MCF 10A (cell line): ENCODE measurements at regions of chr1 and their contacts with region 1.

Region 1: GRCh38 chr1:231550448-231550781 is 21.9 kb downstream of the TSNAX start:
- DNase-seq: peak; percentile 60
- H3K4me3 Mint-ChIP-seq: no peak overlapping the region
- H3K27ac Mint-ChIP-seq: no peak overlapping the region
- H3K4me1 Mint-ChIP-seq: peaks cover 16% of the 10 kb centered on the region
- H3K27me3 Mint-ChIP-seq: no peaks in the 10 kb centered on the region
- CTCF ChIP-seq: peak; percentile 46

Region 2: GRCh38 chr1:231512147-231512698 is 38.2 kb before region 1 on chr1:
- CTCF ChIA-PET with region 1: no interaction called
- POLR2A ChIA-PET with region 1: no interaction called
- intact Hi-C with region 1: no loop called
- DNase-seq: no peak
- H3K4me3 Mint-ChIP-seq: no peak overlapping the region
- H3K27ac Mint-ChIP-seq: no peak overlapping the region
- H3K4me1 Mint-ChIP-seq: peaks cover 7% of the 10 kb centered on the region
- H3K27me3 Mint-ChIP-seq: no peaks in the 10 kb centered on the region
- CTCF ChIP-seq: no peak

Region 3: DNA sequence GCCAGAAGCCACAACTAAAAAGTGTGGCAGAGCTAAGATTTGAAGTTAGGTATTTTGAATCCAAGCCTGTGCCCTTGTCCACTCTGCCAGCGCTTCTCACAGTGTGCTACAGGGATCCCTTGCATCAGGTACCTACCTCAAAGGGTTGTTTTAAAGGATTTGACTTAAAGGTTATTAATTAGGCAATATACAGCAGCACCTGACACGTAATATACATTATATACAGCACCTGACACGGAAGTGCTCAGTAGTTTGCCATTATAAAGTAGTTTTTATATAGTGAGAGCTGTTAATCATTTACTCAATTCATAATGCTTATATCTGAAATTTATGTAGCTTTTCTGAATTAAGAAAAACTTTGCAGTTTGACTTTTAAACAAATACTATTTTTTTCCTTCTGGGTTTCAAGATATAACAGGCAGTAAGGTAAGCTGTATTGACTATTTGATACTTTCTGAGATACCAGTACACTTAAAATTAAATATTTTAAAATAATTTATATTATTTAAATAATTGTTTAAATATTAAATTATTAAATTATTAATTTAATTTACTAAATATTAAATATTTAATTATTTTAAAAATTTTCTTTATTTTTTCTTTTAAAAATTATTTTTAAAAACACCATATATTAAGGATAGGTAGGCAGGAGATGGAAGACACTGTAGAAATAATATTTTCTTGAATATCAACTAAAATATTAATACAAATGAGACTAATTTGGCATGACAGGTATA is 11.4 kb after region 1 on chr1:
- CTCF ChIA-PET with region 1: interaction called, 4 read pairs
- POLR2A ChIA-PET with region 1: interaction called, 10 read pairs
- intact Hi-C with region 1: no loop called
- DNase-seq: no peak
- H3K4me3 Mint-ChIP-seq: no peak overlapping the region
- H3K27ac Mint-ChIP-seq: no peak overlapping the region
- H3K4me1 Mint-ChIP-seq: peaks cover 6% of the 10 kb centered on the region
- H3K27me3 Mint-ChIP-seq: no peaks in the 10 kb centered on the region
- CTCF ChIP-seq: no peak